PC-3 (cell line): ENCODE measurements at regions of chr10 and their contacts with region 1.

Region 1: DNA sequence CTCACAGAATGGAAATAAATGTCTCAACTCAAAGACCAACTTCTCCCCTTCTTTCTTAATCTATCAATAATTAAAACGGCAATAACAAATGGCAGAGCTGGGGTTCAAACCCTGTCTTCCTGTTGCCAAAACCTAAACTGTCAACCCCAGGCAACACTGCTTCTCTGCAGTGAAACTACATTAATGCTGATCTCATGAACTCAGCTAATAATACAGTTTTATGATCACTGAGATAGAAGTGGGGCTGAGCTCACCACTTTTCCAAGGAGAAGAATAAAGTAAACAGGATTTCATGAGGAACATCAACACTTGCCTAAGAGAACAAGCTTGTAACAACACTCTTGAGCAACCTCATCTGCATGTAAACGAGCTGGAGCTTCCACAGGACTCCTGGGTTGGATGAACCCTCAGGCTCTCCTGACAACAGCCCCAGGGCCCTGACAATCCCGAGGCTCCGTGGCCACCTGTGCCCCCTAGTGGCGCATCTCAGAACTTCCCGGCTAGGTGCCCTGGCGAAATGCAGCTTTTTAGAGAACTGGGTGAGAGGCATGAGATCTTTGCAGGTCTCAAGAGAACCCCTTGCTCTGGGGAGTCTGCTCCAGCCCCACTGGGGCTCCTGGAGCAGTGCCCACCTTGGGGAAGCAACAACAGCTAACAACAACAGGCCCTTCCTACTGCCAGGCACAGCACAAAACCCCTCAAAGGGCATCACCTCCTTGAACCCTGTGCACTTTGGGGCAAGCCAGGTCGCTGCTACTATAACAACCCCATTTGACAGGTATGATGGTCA is 169.3 kb downstream of the SH3PXD2A start:
- DNase-seq: peak; percentile 64
- ATAC-seq: peak; percentile 77
- H3K4me3 ChIP-seq: no peak overlapping the region
- H3K27ac ChIP-seq: no peak overlapping the region
- H3K4me1 ChIP-seq: no peaks in the 10 kb centered on the region
- H3K27me3 ChIP-seq: no peaks in the 10 kb centered on the region
- CTCF ChIP-seq: peak; percentile 87

Region 2: DNA sequence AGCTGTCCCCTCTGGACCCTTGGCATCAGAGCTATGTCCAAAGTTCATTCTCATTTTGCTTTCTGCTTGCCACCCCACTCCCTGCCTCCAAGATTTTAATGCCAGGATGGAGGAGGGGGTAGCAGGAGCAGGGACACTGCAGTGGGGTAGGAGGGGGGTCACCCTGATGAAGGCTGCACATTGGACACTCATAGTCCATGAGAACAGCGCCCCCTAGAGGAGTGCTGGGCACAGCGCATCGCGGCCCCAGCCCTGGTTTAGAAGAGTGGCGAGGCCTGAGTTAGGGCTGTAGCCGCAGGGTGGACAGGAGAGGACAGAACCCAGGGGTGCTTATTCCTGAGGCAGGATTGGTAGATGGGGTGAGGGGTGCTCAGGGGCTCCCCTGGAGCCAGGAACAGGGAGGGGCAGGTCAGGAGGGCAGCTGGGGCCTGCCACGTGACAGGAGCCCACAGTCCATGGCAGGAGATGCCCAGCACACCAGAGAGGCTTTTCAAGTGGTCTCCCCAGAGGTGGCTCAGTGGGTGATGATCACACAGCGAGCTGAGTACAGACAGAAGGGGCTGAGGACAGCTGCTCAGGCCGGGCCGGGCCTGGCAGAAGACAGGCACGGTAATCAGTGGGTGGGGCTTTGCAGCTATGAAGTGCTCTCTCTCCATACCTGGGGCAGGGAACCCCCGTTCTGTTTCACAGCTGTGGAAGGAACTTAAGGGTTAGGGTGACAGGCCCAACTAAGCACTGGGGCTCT is 121.1 kb before region 1 on chr10:
- CTCF ChIA-PET with region 1: no interaction called
- POLR2A ChIA-PET with region 1: no interaction called
- intact Hi-C with region 1: no loop called
- DNase-seq: peak; percentile 23
- ATAC-seq: no peak
- H3K4me3 ChIP-seq: no peak overlapping the region
- H3K27ac ChIP-seq: no peak overlapping the region
- H3K4me1 ChIP-seq: no peaks in the 10 kb centered on the region
- H3K27me3 ChIP-seq: no peaks in the 10 kb centered on the region
- CTCF ChIP-seq: peak; percentile 78

Region 3: DNA sequence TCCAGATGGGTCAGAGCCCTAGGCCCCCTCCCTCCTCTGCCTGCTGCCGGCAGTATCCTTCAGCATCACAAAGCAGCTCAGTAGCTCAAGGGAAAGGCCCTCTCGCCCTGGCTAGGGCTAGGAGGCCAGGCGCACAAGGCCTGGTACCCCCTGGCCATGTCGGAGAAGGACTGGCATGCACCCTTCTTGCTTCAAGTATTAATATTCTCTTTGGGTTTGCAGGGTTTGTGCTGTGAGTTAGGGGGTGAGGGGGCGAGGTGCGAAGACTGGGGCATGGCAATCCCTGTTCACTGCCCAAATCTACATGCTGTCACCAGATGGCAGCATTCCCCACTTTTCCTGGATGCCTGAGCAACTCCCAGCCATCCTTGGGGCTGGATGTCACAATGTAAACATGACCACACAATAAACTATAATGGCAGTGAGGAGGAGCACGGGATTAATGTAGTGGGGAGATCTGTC is 87.4 kb before region 1 on chr10:
- CTCF ChIA-PET with region 1: interaction called, 5 read pairs
- POLR2A ChIA-PET with region 1: no interaction called
- intact Hi-C with region 1: loop called (anchors 1 kb)
- DNase-seq: peak; percentile 79
- ATAC-seq: peak; percentile 97
- H3K4me3 ChIP-seq: no peak overlapping the region
- H3K27ac ChIP-seq: no peak overlapping the region
- H3K4me1 ChIP-seq: no peaks in the 10 kb centered on the region; the same call in 1 of the 2 replicates
- H3K27me3 ChIP-seq: no peaks in the 10 kb centered on the region
- CTCF ChIP-seq: peak; percentile 82